CD14-positive monocyte (primary cell): ENCODE measurements at regions of chr3 and their contacts with region 1.

Region 1: DNA sequence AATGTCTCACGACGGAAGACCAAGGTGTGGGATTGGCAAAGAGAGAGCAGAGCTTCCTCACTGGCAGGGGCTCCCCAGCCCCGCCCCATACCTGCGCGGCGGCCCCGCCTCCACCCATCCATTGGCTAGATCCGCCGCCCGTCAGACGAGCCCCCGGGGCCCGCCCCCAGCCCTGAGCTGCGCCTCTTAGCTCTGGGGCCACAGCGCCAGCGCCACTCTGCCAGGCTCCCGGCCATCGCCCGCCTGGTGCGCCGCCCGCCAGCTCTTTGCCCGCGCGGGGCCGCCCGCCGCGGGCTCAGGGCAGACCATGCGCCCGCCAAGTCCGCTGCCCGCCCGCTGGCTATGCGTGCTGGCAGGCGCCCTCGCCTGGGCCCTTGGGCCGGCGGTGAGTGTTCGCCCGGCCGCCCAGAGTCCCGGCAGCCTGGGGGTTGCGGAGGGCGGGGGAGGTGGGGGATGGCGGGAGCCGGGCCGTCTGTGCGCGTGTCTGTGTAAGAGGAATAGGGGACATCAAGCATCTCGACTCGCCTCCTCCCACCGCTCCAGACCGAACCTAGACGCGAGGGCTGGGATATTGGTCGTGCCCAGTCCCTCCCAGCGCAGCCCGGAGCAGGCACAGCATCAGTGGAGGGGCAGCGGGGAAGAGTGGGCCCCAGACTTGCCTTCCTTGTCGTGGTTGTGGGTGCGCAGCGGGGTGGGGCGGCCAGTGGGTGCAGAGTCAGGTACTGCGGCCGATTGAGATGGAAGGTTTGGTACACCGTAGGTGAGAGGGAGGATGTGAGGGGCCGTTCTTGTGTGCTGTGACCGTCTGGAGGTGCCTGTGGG is at the start of gene VIPR1:
- DNase-seq: peak; percentile 56 to 66 (median 65)
- H3K4me3 ChIP-seq: peak within 1 kb of the TSS; percentile 48 to 89 (median 69)
- H3K4me3 Mint-ChIP-seq: peak within 1 kb of the TSS; percentile 92 to 94
- H3K27ac ChIP-seq: peak within 1 kb of the TSS in 1 of 2 donors; percentile 63
- H3K27ac Mint-ChIP-seq: peak within 1 kb of the TSS; percentile 57 to 88 (median 81)
- H3K4me1 ChIP-seq: peaks cover 53 to 61% of the 10 kb centered on the region in 2 donors
- H3K4me1 Mint-ChIP-seq: peaks cover 56% of the 10 kb centered on the region
- H3K27me3 ChIP-seq: peaks cover 12 to 26% of the 10 kb centered on the region in 2 donors
- H3K27me3 Mint-ChIP-seq: peaks cover 27 to 45% (median 33%) of the 10 kb centered on the region in 3 donors
- CTCF ChIP-seq: no peak
- polyA plus RNA-seq, gene VIPR1: 15.5 to 80.9 (median 16.0) TPM

Region 2: GRCh38 chr3:42052484-42053351 is 449.9 kb before region 1 on chr3:
- intact Hi-C with region 1: no loop called
- DNase-seq: no peak
- H3K4me3 ChIP-seq: no peak overlapping the region
- H3K4me3 Mint-ChIP-seq: no peak overlapping the region
- H3K27ac ChIP-seq: peak overlapping the region in 1 of 2 donors; percentile 15
- H3K27ac Mint-ChIP-seq: peak overlapping the region in 3 of 7 donors; percentile 16 to 58 (median 54)
- H3K4me1 ChIP-seq: peaks cover 0 to 5% of the 10 kb centered on the region in 2 donors
- H3K4me1 Mint-ChIP-seq: peaks cover 27% of the 10 kb centered on the region
- H3K27me3 ChIP-seq: no peaks in the 10 kb centered on the region
- H3K27me3 Mint-ChIP-seq: no peaks in the 10 kb centered on the region
- CTCF ChIP-seq: no peak

Region 3: GRCh38 chr3:42539869-42540714 is 37.5 kb after region 1 on chr3:
- intact Hi-C with region 1: loop called (anchors 5 kb)
- DNase-seq: peak; percentile 39 to 63 (median 57)
- H3K4me3 ChIP-seq: no peak overlapping the region
- H3K4me3 Mint-ChIP-seq: no peak overlapping the region
- H3K27ac ChIP-seq: no peak overlapping the region
- H3K27ac Mint-ChIP-seq: no peak overlapping the region
- H3K4me1 ChIP-seq: peaks cover 11 to 31% of the 10 kb centered on the region in 2 donors
- H3K4me1 Mint-ChIP-seq: peaks cover 28% of the 10 kb centered on the region
- H3K27me3 ChIP-seq: no peaks in the 10 kb centered on the region
- H3K27me3 Mint-ChIP-seq: peaks cover 0 to 10% (median 2%) of the 10 kb centered on the region in 3 donors
- CTCF ChIP-seq: peak; percentile 96

Region 4: GRCh38 chr3:42547401-42547945 is 44.8 kb after region 1 on chr3:
- intact Hi-C with region 1: loop called in 1 of 2 experiments (anchors 5 kb)
- DNase-seq: peak; percentile 38 to 52 (median 52)
- H3K4me3 ChIP-seq: no peak overlapping the region
- H3K4me3 Mint-ChIP-seq: no peak overlapping the region
- H3K27ac ChIP-seq: no peak overlapping the region
- H3K27ac Mint-ChIP-seq: no peak overlapping the region
- H3K4me1 ChIP-seq: peaks cover 5 to 9% of the 10 kb centered on the region in 2 donors
- H3K4me1 Mint-ChIP-seq: peaks cover 5% of the 10 kb centered on the region
- H3K27me3 ChIP-seq: no peaks in the 10 kb centered on the region
- H3K27me3 Mint-ChIP-seq: no peaks in the 10 kb centered on the region
- CTCF ChIP-seq: peak; percentile 97

Region 5: DNA sequence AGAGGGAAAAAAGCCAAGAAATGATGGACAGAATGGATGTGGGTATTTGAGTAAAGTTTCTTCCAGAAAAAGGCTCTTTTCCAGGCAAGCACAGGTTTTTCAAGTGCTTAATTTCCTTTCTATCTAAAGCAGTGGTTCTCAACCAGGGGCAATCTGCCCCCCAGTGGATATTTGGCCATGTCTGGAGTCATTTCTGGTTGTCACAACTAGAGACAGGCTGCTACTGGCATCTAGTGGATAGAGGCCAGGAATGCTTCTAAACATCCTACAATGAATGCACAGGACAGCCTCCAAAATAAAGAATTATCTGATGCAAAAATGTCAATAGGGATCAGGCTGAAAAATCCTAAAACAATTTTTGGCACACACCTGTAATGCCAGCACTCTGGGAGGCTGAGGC is 55.2 kb after region 1 on chr3:
- intact Hi-C with region 1: no loop called
- DNase-seq: no peak
- H3K4me3 ChIP-seq: no peak overlapping the region
- H3K4me3 Mint-ChIP-seq: no peak overlapping the region
- H3K27ac ChIP-seq: no peak overlapping the region
- H3K27ac Mint-ChIP-seq: no peak overlapping the region
- H3K4me1 ChIP-seq: no peaks in the 10 kb centered on the region
- H3K4me1 Mint-ChIP-seq: peaks cover 2% of the 10 kb centered on the region
- H3K27me3 ChIP-seq: no peaks in the 10 kb centered on the region
- H3K27me3 Mint-ChIP-seq: peaks cover 0 to 2% (median 0%) of the 10 kb centered on the region in 3 donors
- CTCF ChIP-seq: no peak